ENCODE measurements at regions of chr1 and their contacts with region 1.

Region 1: DNA sequence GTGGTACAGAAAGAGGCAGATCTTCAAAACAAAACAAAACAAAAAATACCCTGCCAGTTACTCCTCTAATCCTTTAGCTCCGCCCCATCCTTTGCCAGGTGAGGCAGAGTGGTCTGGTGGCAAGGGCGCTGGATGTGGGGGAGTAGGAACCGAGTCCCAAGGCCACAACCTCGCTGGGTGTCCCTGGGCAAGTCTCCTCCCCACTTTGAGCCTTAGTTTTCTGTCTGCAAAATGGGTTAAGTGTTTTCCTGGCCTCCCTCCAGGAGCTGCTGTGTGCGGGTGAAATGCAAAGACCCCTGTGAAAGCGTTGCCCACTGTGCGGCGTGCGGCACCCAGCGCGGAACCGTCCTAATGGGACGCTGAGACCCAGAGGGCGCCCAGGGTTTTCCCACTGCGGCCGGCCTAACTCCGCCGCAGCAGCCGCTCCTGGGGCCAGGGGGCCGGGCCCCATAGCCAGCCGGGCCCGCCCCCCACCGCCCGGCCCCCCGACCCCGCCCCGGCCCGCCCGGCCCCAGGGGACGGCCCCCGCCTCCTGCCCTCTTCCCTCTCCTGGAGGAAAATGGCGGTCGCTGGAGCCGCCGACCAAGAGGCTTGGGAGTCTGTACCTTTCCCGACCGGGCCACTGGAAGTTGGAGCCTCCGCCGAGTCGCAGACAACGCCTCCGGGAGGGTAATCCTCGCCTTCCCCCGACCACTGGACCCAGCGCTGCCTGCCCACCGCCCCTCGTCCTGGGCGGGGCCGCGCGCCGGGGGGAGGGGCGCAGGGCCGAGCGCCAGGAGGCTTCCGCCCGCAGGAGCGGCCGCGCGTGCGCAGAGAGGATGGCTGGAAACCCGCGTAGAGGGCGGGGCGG is at the starts of genes ERMAP and SVBP:
- DNase-seq: peak; percentile 86 to 98 (median 94)
- ATAC-seq: peak; percentile 88
- H3K4me3 ChIP-seq: peak within 1 kb of the TSS; percentile 78
- H3K4me3 Mint-ChIP-seq: peak within 1 kb of the TSS; percentile 96
- H3K27ac ChIP-seq: peak within 1 kb of the TSS; percentile 77 to 79
- H3K27ac Mint-ChIP-seq: peak within 1 kb of the TSS; percentile 89
- H3K4me1 ChIP-seq: peaks cover 10% of the 10 kb centered on the region
- H3K4me1 Mint-ChIP-seq: peaks cover 27% of the 10 kb centered on the region
- H3K27me3 ChIP-seq: no peaks in the 10 kb centered on the region
- H3K27me3 Mint-ChIP-seq: no peaks in the 10 kb centered on the region
- CTCF ChIP-seq: no peak
- total RNA-seq, gene ERMAP: 4.4 to 5.0 TPM
- total RNA-seq, gene SVBP: 19.2 to 21.3 TPM

Region 2: DNA sequence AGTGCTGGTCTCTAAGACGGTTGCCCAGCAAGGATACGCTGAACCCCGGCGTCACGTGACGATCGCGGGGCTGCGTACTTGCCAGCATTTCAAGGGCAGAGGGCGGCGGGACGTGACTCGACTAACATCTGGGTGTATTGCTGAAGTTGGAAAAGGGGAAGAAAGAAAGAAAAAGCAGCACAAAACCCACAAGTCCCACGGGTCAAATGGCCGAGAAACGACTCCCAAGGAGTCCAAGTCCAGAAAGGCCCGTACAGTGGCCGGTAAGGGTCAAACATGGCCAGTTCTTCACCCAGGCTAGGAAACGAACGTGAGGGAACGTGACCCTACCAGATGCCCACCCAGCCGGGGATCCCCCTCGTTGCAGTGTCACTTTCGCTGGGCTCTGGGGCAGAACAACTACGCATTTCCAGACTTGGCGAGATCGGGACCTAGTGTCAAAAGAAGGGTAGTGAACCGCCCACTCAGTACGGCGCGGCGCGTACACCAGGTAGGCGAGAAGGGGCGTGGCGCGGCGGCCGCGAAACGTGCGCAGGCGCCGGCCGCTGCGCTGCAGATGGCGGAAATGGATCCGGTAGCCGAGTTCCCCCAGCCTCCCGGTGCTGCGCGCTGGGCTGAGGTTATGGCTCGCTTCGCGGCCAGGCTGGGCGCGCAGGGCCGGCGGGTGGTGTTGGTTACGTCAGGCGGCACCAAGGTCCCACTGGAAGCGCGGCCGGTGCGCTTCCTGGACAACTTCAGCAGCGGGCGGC is 360.6 kb before region 1 on chr1 and contains the starts of genes PPCS and ZMYND12:
- CTCF ChIA-PET with region 1: no interaction called
- POLR2A ChIA-PET with region 1: no interaction called
- intact Hi-C with region 1: loop called in 1 of 2 experiments (anchors 5 kb)
- DNase-seq: peak; percentile 84 to 97 (median 89)
- ATAC-seq: peak; percentile 90
- H3K4me3 ChIP-seq: peak within 1 kb of the TSS; percentile 70
- H3K4me3 Mint-ChIP-seq: peak within 1 kb of the TSS; percentile 95
- H3K27ac ChIP-seq: peak within 1 kb of the TSS; percentile 98 to 99
- H3K27ac Mint-ChIP-seq: peak within 1 kb of the TSS; percentile 96
- H3K4me1 ChIP-seq: peaks cover 24% of the 10 kb centered on the region
- H3K4me1 Mint-ChIP-seq: peaks cover 56% of the 10 kb centered on the region
- H3K27me3 ChIP-seq: no peaks in the 10 kb centered on the region
- H3K27me3 Mint-ChIP-seq: no peaks in the 10 kb centered on the region
- CTCF ChIP-seq: peak; percentile 28
- total RNA-seq, gene PPCS: 39.7 to 40.4 TPM
- total RNA-seq, gene ZMYND12: 0.58 to 0.70 TPM

Region 3: GRCh38 chr1:42846257-42847110 is 29.7 kb after region 1 on chr1 and contains the start of gene ZNF691:
- CTCF ChIA-PET with region 1: interaction called, 20 read pairs
- POLR2A ChIA-PET with region 1: interaction called, 23 read pairs
- intact Hi-C with region 1: loop called (anchors 1 to 2 kb)
- DNase-seq: peak; percentile 73 to 96 (median 82)
- ATAC-seq: peak; percentile 98
- H3K4me3 ChIP-seq: peak within 1 kb of the TSS; percentile 96
- H3K4me3 Mint-ChIP-seq: peak within 1 kb of the TSS; percentile 94
- H3K27ac ChIP-seq: peak within 1 kb of the TSS in 1 of 2 donors; percentile 56
- H3K27ac Mint-ChIP-seq: peak within 1 kb of the TSS; percentile 67
- H3K4me1 ChIP-seq: peaks cover 19% of the 10 kb centered on the region
- H3K4me1 Mint-ChIP-seq: peaks cover 38% of the 10 kb centered on the region
- H3K27me3 ChIP-seq: no peaks in the 10 kb centered on the region
- H3K27me3 Mint-ChIP-seq: no peaks in the 10 kb centered on the region
- CTCF ChIP-seq: peak; percentile 47
- total RNA-seq, gene ZNF691: 1.2 to 1.7 TPM

Region 4: GRCh38 chr1:42866549-42866948 is 49.7 kb after region 1 on chr1:
- CTCF ChIA-PET with region 1: no interaction called
- POLR2A ChIA-PET with region 1: no interaction called
- intact Hi-C with region 1: no loop called
- DNase-seq: no peak
- ATAC-seq: no peak
- H3K4me3 ChIP-seq: no peak overlapping the region
- H3K4me3 Mint-ChIP-seq: no peak overlapping the region
- H3K27ac ChIP-seq: no peak overlapping the region
- H3K27ac Mint-ChIP-seq: no peak overlapping the region
- H3K4me1 ChIP-seq: no peaks in the 10 kb centered on the region
- H3K4me1 Mint-ChIP-seq: no peaks in the 10 kb centered on the region
- H3K27me3 ChIP-seq: peaks cover 0 to 3% of the 10 kb centered on the region in 2 experiments
- H3K27me3 Mint-ChIP-seq: peaks cover 17% of the 10 kb centered on the region
- CTCF ChIP-seq: no peak

Region 5: DNA sequence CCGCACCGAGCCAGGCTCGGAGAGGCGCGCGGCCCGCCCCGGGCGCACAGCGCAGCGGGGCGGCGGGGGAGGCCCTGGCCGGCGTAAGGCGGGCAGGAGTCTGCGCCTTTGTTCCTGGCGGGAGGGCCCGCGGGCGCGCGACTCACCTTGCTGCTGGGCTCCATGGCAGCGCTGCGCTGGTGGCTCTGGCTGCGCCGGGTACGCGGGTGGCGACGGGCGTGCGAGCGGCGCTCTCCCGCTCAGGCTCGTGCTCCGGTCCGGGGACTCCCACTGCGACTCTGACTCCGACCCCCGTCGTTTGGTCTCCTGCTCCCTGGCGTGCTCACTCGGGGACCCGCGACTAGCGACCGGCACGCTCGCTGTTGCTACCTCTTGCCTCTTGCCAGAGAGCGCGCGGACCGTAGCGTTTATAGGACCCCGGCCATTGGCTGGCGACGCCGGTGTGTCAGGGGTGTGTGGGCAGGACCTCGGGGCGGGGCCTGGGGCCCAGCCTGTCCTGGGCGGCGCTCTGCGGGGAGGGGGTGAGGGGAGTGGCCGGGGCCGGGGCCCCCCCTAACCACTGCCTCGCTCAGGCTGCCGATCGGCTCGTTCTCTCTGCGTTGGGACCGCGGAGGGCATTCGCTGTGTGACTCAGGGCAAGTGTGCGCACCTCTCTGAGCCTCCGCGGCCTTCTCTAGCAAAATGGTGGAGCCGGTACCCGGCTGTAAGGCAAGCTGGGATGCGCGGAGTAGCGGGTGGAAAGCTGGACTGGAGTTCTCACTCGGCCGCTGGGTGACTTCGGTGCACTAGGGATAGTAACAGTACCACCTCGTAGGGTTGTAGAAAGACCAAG is 141.9 kb after region 1 on chr1 and contains the start of gene SLC2A1:
- CTCF ChIA-PET with region 1: no interaction called
- POLR2A ChIA-PET with region 1: no interaction called
- intact Hi-C with region 1: loop called in 1 of 2 experiments (anchors 5 kb)
- DNase-seq: peak; percentile 89 to 98 (median 94)
- ATAC-seq: peak; percentile 90
- H3K4me3 ChIP-seq: peak within 1 kb of the TSS; percentile 89
- H3K4me3 Mint-ChIP-seq: peak within 1 kb of the TSS; percentile 100
- H3K27ac ChIP-seq: peak within 1 kb of the TSS; percentile 73 to 76
- H3K27ac Mint-ChIP-seq: peak within 1 kb of the TSS; percentile 96
- H3K4me1 ChIP-seq: peaks cover 54% of the 10 kb centered on the region
- H3K4me1 Mint-ChIP-seq: peaks cover 60% of the 10 kb centered on the region
- H3K27me3 ChIP-seq: no peaks in the 10 kb centered on the region
- H3K27me3 Mint-ChIP-seq: no peaks in the 10 kb centered on the region
- CTCF ChIP-seq: no peak
- total RNA-seq, gene SLC2A1: 78.6 to 80.9 TPM

Measured in CD4-positive, alpha-beta T cell (primary cell).